Activated T-helper 2 cell treated with anti-CD3 and anti-CD28 coated beads, Interferon-gamma antibody, Interleukin-2, Interleukin-4, amounts not matched to agents 10 μg/mL and 5 μg/mL and 100 μg/mL, durations not matched to agents 14 hours and 24 hours and 36 hours (primary cell): ENCODE measurements at regions of chr3 and their contacts with region 1.

Region 1: GRCh38 chr3:45938864-45939263 is 4.4 kb upstream of the CXCR6 start:
- DNase-seq: peak; percentile 75
- H3K4me3 Mint-ChIP-seq: no peak overlapping the region
- H3K27ac Mint-ChIP-seq: no peak overlapping the region
- H3K4me1 Mint-ChIP-seq: peaks cover 44% of the 10 kb centered on the region
- H3K27me3 Mint-ChIP-seq: no peaks in the 10 kb centered on the region

Region 2: DNA sequence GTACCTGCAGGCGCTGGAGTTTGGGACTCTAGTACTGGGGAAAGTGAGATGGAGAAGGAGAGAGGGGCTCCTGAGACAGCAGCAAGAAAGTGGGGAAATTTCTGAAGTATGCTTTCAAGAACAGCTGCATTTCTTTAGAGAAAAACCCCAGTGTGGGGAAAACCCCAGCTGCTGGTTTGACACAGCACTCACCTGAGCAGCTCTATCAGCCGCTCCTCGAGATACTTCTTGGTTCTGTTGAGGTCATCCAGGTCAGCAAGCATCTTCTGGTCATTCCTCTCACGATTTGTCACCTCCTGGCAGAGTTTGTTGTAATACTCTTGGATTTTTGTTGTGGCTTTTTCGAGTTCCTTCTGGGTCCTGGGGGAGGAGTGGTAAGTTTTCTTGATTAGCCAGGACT is 23.2 kb after region 1 on chr3:
- intact Hi-C with region 1: loop called (anchors 1 kb)
- DNase-seq: no peak
- H3K4me3 Mint-ChIP-seq: no peak overlapping the region
- H3K27ac Mint-ChIP-seq: peak overlapping the region; percentile 63
- H3K4me1 Mint-ChIP-seq: peaks cover 56% of the 10 kb centered on the region
- H3K27me3 Mint-ChIP-seq: no peaks in the 10 kb centered on the region

Region 3: GRCh38 chr3:46017720-46018119 is 78.9 kb after region 1 on chr3:
- intact Hi-C with region 1: loop called (anchors 2 kb)
- DNase-seq: no peak
- H3K4me3 Mint-ChIP-seq: peak overlapping the region; percentile 24
- H3K27ac Mint-ChIP-seq: peak overlapping the region; percentile 70
- H3K4me1 Mint-ChIP-seq: peaks cover 48% of the 10 kb centered on the region
- H3K27me3 Mint-ChIP-seq: peaks cover 7% of the 10 kb centered on the region

Region 4: DNA sequence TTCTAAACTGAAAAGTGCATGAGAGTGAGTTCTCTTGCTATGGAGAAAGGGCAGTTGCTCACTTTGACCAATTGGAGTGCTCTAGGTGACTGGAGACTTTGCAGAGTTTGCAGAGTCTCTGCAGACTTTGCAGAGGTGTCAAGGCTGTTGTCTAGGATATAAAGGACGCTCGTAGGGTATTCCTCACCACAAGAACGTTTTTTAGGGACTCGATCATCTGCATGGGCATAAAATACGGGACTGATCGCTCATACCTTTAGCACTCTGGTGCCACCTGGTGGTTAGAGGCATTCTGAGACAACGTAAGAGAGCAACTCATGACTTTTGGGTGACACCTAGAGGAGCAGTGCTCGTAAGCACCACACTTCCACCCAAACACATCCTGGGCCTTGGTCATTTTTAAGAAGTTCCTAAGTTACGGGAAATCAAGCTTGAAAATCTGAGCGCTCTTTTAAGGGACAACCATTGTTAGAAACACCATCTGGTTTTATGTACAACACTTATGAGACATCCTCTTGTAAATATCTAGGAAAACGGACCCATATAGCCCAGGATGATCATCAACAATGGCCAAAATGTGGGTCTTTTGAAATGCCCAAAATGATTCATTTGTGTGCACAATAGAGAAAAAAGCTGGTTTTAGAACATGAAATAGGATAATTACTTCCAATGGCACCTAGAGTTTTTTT is 140.0 kb after region 1 on chr3:
- intact Hi-C with region 1: loop called (anchors 1 kb)
- DNase-seq: peak; percentile 79
- H3K4me3 Mint-ChIP-seq: no peak overlapping the region
- H3K27ac Mint-ChIP-seq: no peak overlapping the region
- H3K4me1 Mint-ChIP-seq: peaks cover 35% of the 10 kb centered on the region
- H3K27me3 Mint-ChIP-seq: peaks cover 40% of the 10 kb centered on the region